ENCODE measurements at regions of chr1 and their contacts with region 1.

Region 1: GRCh38 chr1:159854693-159855192 is 7.7 kb downstream of the VSIG8 start:
- DNase-seq: peak; percentile 47 to 88 (median 77)
- ATAC-seq: peak; percentile 93
- H3K4me3 ChIP-seq: peak overlapping the region; percentile 70 to 71
- H3K4me3 Mint-ChIP-seq: peak overlapping the region; percentile 92
- H3K27ac ChIP-seq: peak overlapping the region; percentile 70 to 80
- H3K27ac Mint-ChIP-seq: peak overlapping the region; percentile 93
- H3K4me1 ChIP-seq: peaks cover 18% of the 10 kb centered on the region
- H3K4me1 Mint-ChIP-seq: peaks cover 37% of the 10 kb centered on the region
- H3K27me3 ChIP-seq: no peaks in the 10 kb centered on the region
- H3K27me3 Mint-ChIP-seq: no peaks in the 10 kb centered on the region
- CTCF ChIP-seq: no peak

Region 2: GRCh38 chr1:159817276-159818041 is 37.3 kb before region 1 on chr1:
- CTCF ChIA-PET with region 1: interaction called, 3 read pairs
- POLR2A ChIA-PET with region 1: no interaction called
- intact Hi-C with region 1: loop called in 1 of 2 experiments (anchors 5 kb)
- DNase-seq: no peak
- ATAC-seq: no peak
- H3K4me3 ChIP-seq: no peak overlapping the region
- H3K4me3 Mint-ChIP-seq: no peak overlapping the region
- H3K27ac ChIP-seq: no peak overlapping the region
- H3K27ac Mint-ChIP-seq: no peak overlapping the region
- H3K4me1 ChIP-seq: no peaks in the 10 kb centered on the region
- H3K4me1 Mint-ChIP-seq: peaks cover 3% of the 10 kb centered on the region
- H3K27me3 ChIP-seq: no peaks in the 10 kb centered on the region
- H3K27me3 Mint-ChIP-seq: no peaks in the 10 kb centered on the region
- CTCF ChIP-seq: no peak

Region 3: DNA sequence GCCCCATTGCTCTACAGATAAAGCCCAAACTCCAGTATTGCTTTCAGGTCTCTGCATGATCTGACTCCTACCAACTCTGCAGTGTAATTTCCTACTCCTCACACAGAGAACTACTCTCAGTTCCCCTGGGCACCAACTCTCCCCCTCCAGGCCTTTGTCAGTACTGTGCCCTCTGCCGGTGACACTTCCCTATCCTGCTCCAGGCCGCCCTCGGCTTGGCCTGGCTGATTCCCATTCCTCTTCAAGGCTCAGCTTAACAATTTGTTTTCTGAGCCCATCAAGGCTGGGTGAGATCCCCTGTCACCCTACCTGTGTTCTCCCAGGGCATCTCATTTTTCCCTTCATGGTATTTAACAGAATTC is 25.5 kb before region 1 on chr1:
- CTCF ChIA-PET with region 1: interaction called, 3 read pairs
- POLR2A ChIA-PET with region 1: interaction called, 4 read pairs
- intact Hi-C with region 1: loop called in 1 of 2 experiments (anchors 2 kb)
- DNase-seq: peak in 1 of 9 experiments; percentile 28
- ATAC-seq: no peak
- H3K4me3 ChIP-seq: no peak overlapping the region
- H3K4me3 Mint-ChIP-seq: peak overlapping the region; percentile 57
- H3K27ac ChIP-seq: no peak overlapping the region
- H3K27ac Mint-ChIP-seq: no peak overlapping the region
- H3K4me1 ChIP-seq: peaks cover 49% of the 10 kb centered on the region
- H3K4me1 Mint-ChIP-seq: peaks cover 56% of the 10 kb centered on the region
- H3K27me3 ChIP-seq: no peaks in the 10 kb centered on the region
- H3K27me3 Mint-ChIP-seq: no peaks in the 10 kb centered on the region
- CTCF ChIP-seq: no peak

Measured in CD8-positive, alpha-beta T cell (primary cell).